Astrocyte of the cerebellum (primary cell): ENCODE measurements at regions of chr12 and their contacts with region 1.

Region 1: GRCh38 chr12:112226768-112227167 is 101.4 kb downstream of the TRAFD1 start:
- DNase-seq: no peak
- H3K4me3 ChIP-seq: no peak overlapping the region
- CTCF ChIP-seq: no peak

Region 2: DNA sequence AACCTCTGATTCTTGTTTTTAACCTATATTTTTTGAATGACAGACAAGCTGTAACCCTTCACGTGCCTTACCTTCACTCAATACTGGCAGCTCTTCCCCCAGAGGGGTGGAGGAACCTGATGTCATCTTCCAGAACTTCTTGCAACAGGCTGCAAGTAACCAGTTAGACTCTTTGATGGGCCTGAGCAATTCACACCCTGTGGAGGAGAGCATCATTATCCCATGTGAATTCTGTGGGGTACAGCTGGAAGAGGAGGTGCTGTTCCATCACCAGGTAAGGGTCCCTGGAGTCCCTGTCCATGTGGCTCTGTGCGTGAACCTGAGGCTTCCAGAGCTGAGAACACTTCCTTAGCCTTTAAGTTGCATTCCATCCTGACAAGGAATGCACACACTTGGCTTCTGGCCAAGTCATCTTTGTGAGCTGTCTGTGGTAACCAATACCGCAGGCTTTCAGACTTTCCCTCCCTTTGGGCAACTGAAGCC is 78.7 kb before region 1 on chr12:
- in situ Hi-C with region 1: no loop called
- DNase-seq: peak; percentile 71
- H3K4me3 ChIP-seq: no peak overlapping the region
- CTCF ChIP-seq: no peak

Region 3: DNA sequence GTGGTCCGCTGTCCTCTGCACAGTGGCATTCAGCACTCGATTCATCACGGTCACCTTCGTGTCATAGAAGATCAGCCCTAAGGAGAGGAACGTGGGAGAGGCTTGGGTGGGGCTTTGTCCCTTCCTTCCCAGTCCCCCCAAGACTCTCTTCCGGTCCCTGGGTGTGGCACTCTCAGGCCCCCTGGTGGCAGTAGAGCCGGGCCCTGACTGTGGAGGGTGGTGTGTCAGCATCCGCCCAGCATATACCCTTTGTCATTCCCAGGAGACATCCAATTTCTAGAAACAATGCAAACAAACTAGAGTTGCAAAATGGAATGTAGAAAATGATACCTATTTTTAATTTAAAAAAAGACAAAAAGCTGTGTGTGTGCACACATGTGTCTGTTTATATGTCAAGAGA is 56.4 kb before region 1 on chr12:
- in situ Hi-C with region 1: no loop called
- DNase-seq: no peak
- H3K4me3 ChIP-seq: no peak overlapping the region
- CTCF ChIP-seq: peak; percentile 46

Region 4: DNA sequence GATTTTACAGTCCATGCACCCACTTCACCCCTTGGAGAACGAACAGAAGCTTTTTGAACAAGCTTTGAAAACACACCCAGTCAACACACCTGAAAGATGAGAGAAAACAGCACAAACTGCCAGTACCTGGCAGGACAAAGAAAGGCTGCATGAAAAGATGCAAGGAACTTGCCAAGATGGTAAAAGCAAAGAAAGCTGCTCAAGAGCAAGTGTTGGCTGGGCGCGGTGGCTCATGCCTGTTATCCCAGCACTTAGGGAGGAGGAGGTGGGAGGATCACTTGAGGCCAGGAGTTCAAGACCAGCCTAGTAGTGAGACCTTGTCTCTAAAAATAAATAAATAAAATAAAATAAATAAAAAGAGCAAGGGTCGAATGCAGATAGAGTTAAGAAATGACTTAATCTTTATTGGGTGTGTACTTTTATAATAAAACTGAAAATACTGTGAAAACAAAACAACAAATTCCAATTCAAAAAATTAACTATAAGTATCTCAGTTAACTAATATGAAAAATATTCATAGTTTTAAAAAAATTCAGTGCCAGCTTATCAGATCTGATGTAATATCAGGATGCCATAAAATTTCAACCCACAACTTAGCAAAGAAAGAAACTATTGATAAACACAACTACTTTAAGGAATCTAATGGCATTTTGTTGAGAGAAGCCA is 96.2 kb after region 1 on chr12:
- in situ Hi-C with region 1: loop called (anchors 5 kb)
- DNase-seq: no peak
- H3K4me3 ChIP-seq: no peak overlapping the region
- CTCF ChIP-seq: no peak